Natural killer cell (primary cell): ENCODE measurements at regions of chr18 and their contacts with region 1.

Region 1: GRCh38 chr18:58781627-58782194 is 83.0 kb upstream of the ZNF532 start:
- DNase-seq: peak; percentile 22 to 82
- ATAC-seq: peak; percentile 55 to 82 (median 73)
- H3K4me3 ChIP-seq: no peak overlapping the region
- H3K4me3 Mint-ChIP-seq: no peak overlapping the region
- H3K27ac ChIP-seq: no peak overlapping the region
- H3K27ac Mint-ChIP-seq: no peak overlapping the region
- H3K4me1 ChIP-seq: no peaks in the 10 kb centered on the region
- H3K4me1 Mint-ChIP-seq: no peaks in the 10 kb centered on the region
- H3K27me3 ChIP-seq: no peaks in the 10 kb centered on the region
- H3K27me3 Mint-ChIP-seq: peaks cover 0 to 7% of the 10 kb centered on the region in 2 donors
- CTCF ChIP-seq: peak; percentile 77

Region 2: DNA sequence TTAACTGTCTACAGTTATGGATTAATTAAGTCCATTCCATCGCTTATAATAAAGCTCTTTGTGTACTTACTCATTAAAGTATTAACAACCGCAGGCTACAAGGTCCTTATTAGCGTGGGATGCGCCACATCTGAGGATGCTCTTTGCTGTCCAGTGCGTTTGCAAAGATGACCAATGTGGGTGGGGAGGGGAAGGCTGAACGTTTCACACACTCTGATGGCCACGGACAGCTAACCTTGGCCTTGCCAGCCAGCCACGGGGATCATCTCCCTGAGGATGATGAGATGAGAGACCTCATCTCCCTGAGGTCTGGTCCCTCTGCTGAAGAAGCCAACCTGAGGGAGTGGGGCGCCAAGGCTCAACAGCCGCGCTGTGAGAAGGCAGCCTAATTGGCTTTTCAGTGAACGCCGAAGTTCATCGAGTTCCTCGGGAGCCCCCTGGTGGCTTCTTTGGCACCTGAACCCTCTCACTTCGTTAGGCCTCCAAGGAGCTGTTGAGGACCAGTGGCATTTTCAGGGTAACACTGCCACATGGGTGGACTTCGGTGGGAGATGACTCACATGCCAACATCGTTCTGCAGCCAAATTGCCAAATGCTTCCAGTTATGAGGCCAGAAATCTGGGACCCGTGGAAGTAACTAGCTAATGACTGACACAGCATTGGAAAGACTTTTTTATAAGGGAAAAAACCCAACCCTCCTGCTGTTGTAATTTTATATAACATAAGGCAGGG is 288.6 kb after region 1 on chr18:
- intact Hi-C with region 1: loop called (anchors 1 kb)
- DNase-seq: peak; percentile 50 to 81
- ATAC-seq: peak; percentile 65 to 88 (median 68)
- H3K4me3 ChIP-seq: no peak overlapping the region
- H3K4me3 Mint-ChIP-seq: no peak overlapping the region
- H3K27ac ChIP-seq: no peak overlapping the region
- H3K27ac Mint-ChIP-seq: no peak overlapping the region
- H3K4me1 ChIP-seq: no peaks in the 10 kb centered on the region
- H3K4me1 Mint-ChIP-seq: no peaks in the 10 kb centered on the region
- H3K27me3 ChIP-seq: no peaks in the 10 kb centered on the region
- H3K27me3 Mint-ChIP-seq: peaks cover 0 to 10% of the 10 kb centered on the region in 2 donors
- CTCF ChIP-seq: peak; percentile 79